ENCODE measurements at regions of chr10 and their contacts with region 1.

Region 1: GRCh38 chr10:73730153-73730906 is 13.8 kb upstream of the SEC24C start:
- DNase-seq: peak; percentile 100
- ATAC-seq: peak; percentile 87
- H3K4me3 ChIP-seq: peak overlapping the region; percentile 69
- H3K27ac ChIP-seq: peak overlapping the region; percentile 72
- H3K4me1 ChIP-seq: peaks cover 9% of the 10 kb centered on the region
- H3K27me3 ChIP-seq: no peaks in the 10 kb centered on the region
- CTCF ChIP-seq: no peak

Region 2: DNA sequence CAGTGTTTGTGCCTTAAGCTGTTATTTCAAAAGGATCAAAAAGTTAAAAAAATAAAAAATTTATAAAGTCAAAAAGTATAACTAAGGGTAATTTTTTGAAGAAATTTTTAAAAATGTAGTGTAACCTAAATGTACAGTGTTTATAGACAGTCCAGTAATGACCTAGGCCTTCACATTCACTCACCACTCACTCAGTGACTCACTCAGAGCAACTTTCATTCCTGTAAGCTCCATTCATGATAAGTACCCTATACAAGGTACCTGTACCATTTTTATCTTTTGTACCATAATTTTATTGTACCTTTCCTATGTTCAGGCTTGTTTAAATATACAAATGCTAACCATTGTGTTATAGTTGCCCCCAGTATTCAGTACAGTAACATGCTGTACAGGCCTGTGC is 504.8 kb before region 1 on chr10:
- CTCF ChIA-PET with region 1: no interaction called
- POLR2A ChIA-PET with region 1: interaction called, 16 read pairs
- intact Hi-C with region 1: no loop called
- DNase-seq: peak; percentile 77
- ATAC-seq: peak; percentile 86
- H3K4me3 ChIP-seq: no peak overlapping the region
- H3K27ac ChIP-seq: no peak overlapping the region
- H3K4me1 ChIP-seq: no peaks in the 10 kb centered on the region; the same call in 1 of the 2 replicates
- H3K27me3 ChIP-seq: no peaks in the 10 kb centered on the region
- CTCF ChIP-seq: no peak

Region 3: DNA sequence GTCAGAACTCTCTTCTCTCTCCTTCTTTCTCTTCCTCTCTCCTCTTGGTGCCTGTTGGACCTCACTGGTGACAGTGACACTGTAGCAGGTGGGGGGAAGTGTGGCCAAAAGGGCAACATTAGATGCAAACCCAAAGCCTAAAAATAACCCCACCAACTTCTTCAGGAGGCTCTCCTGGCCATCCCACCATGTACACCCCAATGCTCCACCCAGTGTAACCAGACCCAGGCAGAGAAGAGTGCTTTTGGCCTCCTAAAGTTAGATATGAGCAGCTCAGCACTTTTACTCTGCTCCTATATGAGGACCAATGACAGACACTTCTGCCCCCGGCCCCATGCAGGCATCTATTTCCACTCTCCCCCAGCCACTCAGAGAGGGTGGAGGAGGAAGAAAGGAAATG is 94.5 kb before region 1 on chr10:
- CTCF ChIA-PET with region 1: no interaction called
- POLR2A ChIA-PET with region 1: no interaction called
- intact Hi-C with region 1: no loop called
- DNase-seq: no peak
- ATAC-seq: no peak; the same call in 1 of the 2 replicates
- H3K4me3 ChIP-seq: no peak overlapping the region
- H3K27ac ChIP-seq: no peak overlapping the region
- H3K4me1 ChIP-seq: no peaks in the 10 kb centered on the region
- H3K27me3 ChIP-seq: no peaks in the 10 kb centered on the region
- CTCF ChIP-seq: no peak

Region 4: DNA sequence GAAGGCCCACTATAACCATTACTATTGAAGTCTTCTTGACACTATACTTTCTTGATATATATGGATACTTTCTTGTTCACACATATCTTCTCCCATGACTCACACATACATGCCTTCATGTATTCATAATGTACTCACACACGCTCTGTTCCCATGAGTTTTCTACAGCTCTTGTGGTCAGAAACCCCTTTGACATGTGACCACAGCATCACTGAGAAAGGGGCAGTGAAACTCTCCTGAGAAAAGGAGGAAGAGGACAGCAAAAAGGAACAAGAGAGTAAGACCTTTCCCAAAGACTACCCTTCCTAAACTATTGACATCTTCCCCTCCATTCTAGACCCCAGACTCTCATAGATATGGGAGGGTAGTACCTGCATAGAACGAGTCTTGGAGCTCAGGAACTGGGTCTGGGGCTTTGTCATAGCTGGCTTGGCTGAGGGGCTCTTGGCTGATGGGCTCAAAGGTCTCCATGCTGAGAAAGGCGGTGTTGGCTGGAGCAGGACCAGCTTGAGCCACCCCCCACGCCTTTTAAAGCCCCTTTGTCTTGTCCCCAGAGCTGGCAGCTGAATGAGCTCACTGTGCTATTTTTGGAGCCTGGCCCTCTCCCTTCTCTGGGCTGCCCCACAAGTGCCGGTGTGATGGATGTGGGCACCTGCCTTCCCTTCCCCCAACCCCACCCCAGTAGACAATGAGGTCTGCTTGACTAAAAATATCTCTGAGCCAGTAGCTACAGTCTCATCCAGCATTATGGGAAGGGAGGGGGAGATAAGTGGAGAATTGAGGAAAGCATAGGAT is 79.6 kb before region 1 on chr10:
- CTCF ChIA-PET with region 1: interaction called, 4 read pairs
- POLR2A ChIA-PET with region 1: no interaction called
- intact Hi-C with region 1: loop called (anchors 1 kb)
- DNase-seq: peak; percentile 53
- ATAC-seq: no peak
- H3K4me3 ChIP-seq: no peak overlapping the region
- H3K27ac ChIP-seq: no peak overlapping the region
- H3K4me1 ChIP-seq: no peaks in the 10 kb centered on the region
- H3K27me3 ChIP-seq: no peaks in the 10 kb centered on the region
- CTCF ChIP-seq: no peak

Region 5: GRCh38 chr10:73974309-73974946 is 244.1 kb after region 1 on chr10:
- CTCF ChIA-PET with region 1: no interaction called
- POLR2A ChIA-PET with region 1: no interaction called
- intact Hi-C with region 1: no loop called
- DNase-seq: no peak
- ATAC-seq: no peak
- H3K4me3 ChIP-seq: no peak overlapping the region
- H3K27ac ChIP-seq: no peak overlapping the region
- H3K4me1 ChIP-seq: no peaks in the 10 kb centered on the region
- H3K27me3 ChIP-seq: no peaks in the 10 kb centered on the region
- CTCF ChIP-seq: no peak

Region 6: DNA sequence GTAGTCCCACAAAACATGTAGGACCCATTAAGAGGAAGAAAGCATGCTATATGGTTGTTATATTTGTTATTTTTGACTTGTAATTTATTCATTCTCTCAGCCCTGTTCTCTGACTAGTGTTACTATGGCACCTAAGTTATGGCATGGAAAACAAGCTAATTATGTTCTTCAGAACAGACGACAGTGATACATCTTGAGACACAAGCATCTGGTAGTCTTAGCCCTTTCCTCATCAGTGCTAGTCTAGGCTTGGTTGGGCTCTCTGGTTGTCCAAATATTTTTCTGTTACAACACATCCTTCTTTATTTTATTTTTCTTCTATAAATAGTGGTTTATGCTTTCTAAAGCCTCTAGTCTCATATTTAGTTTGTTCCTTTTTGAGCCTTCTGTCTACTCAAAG is 787.7 kb after region 1 on chr10:
- CTCF ChIA-PET with region 1: no interaction called
- POLR2A ChIA-PET with region 1: no interaction called
- intact Hi-C with region 1: no loop called
- DNase-seq: no peak
- ATAC-seq: peak; percentile 24; the same call in 1 of the 2 replicates
- H3K4me3 ChIP-seq: no peak overlapping the region
- H3K27ac ChIP-seq: no peak overlapping the region
- H3K4me1 ChIP-seq: no peaks in the 10 kb centered on the region
- H3K27me3 ChIP-seq: no peaks in the 10 kb centered on the region
- CTCF ChIP-seq: no peak